BJ (cell line): ENCODE measurements at regions of chr20 and their contacts with region 1.

Region 1: DNA sequence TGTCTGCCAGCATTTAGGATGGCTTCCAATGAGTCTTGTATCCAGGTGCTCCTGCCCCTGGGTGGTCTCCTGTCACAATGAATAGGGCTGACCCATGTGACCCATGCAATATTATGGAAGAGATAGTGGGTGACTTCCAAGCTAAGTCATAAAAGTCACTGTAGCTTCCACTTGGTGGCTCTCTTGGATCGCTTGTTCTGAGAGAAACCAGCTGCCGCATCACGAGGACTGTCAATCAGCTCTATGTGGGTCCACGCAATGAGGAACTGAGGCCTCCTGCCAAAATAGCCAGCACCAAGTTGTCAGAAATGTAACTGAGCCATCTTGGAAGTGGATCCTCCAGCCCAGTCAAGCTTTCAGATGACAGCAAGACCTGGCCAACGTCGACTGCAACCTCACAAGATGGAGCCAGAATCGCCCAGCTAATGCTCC is 14.9 kb upstream of the MATN4 start:
- DNase-seq: no peak
- H3K4me3 ChIP-seq: no peak overlapping the region
- H3K27me3 ChIP-seq: 0 out of 2 replicates have a peak, but pooled peaks cover 1% of the 10 kb centered on the region
- CTCF ChIP-seq: no peak

Region 2: DNA sequence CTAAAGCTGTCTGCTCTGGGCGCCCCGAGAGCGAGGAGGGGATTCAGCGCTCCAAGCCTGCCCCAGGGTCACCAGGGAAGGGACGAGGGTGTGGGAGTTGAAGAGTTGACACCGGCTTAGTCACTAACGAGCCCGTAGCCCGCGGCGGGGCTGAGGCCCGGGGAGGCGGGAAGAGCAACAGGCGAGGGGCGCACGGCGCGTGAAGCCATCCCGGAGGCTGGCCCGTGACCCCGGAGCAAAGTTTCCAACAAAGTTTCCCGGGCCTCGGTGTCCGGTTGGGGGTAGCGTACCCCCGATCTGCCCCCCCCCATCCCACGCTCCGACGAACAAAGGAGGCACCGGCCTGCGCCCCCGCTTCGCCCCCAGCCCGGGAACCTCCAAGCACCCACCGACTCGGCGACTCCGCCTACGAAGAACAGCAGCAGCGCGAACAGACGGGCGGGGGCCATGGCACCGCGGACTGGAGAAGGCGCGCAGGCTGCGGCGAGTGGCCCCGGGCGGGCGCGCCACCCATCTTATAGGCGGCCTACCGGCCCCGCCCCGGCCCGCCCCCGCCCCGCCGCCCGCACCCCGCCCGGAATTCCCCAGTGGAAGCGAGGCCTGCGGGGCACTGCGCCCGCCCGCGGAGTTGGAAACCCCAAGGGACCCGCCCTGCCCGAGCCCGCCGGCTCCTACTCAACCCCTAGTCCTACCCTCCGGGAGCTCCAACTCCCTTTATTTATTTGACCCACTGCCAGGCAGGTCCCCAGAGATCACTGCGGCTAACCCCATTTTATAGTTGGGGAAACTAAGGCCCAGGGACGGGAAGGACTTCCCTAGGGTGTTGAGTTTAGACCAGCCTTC is 25.2 kb after region 1 on chr20 and contains the start of gene SDC4:
- CTCF ChIA-PET with region 1: interaction called, 7 read pairs
- POLR2A ChIA-PET with region 1: interaction called, 12 read pairs
- DNase-seq: no peak
- H3K4me3 ChIP-seq: peak within 1 kb of the TSS; percentile 62
- H3K27me3 ChIP-seq: no peaks in the 10 kb centered on the region
- CTCF ChIP-seq: no peak
- polyA plus RNA-seq, gene SDC4: 147 and 153 TPM in 2 replicates

Region 3: GRCh38 chr20:45373353-45374100 is 50.6 kb after region 1 on chr20:
- CTCF ChIA-PET with region 1: interaction called, 16 read pairs
- POLR2A ChIA-PET with region 1: no interaction called
- DNase-seq: no peak
- H3K4me3 ChIP-seq: peak overlapping the region; percentile 33
- H3K27me3 ChIP-seq: no peaks in the 10 kb centered on the region
- CTCF ChIP-seq: peak; percentile 94

Region 4: GRCh38 chr20:45450097-45450818 is 127.3 kb after region 1 on chr20:
- CTCF ChIA-PET with region 1: interaction called, 21 read pairs
- POLR2A ChIA-PET with region 1: no interaction called
- DNase-seq: no peak
- H3K4me3 ChIP-seq: no peak overlapping the region
- H3K27me3 ChIP-seq: peaks cover 8% of the 10 kb centered on the region
- CTCF ChIP-seq: peak; percentile 55

Region 5: GRCh38 chr20:45456632-45457031 is 133.7 kb after region 1 on chr20:
- CTCF ChIA-PET with region 1: interaction called, 20 read pairs
- POLR2A ChIA-PET with region 1: no interaction called
- DNase-seq: no peak
- H3K4me3 ChIP-seq: no peak overlapping the region
- H3K27me3 ChIP-seq: peaks cover 15% of the 10 kb centered on the region
- CTCF ChIP-seq: 0 out of 2 replicates have a peak, but pooled peaks have one; percentile 17